Activated B cell treated with CpG ODN at 0.5 μM for 24 hours (primary cell): ENCODE measurements at regions of chr2 and their contacts with region 1.

Region 1: DNA sequence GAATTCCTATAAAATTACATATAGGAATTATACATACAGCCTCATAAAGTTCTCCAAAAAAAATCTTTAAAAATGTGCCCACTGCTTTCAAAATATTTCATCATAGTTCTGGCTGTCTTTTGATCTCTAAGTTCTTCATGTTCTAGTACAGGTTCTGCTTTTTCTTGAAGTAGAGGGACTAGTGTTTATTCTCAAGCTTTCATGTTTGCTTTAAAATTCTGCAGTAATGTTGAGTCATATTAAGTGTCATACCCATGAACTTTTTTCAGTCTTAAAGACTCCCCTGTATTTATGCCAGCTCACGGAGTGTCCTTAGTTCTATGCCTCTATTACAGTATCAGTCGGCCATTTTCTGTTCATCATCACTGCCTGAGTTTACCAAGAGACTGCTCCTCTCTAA is 54.8 kb upstream of the CCDC141 start:
- DNase-seq: no peak
- ATAC-seq: no peak
- H3K4me3 Mint-ChIP-seq: no peak overlapping the region
- H3K27ac Mint-ChIP-seq: peak overlapping the region; percentile 3
- H3K4me1 Mint-ChIP-seq: peaks cover 10% of the 10 kb centered on the region
- H3K27me3 Mint-ChIP-seq: no peaks in the 10 kb centered on the region
- CTCF ChIP-seq: no peak

Region 2: GRCh38 chr2:179068991-179069643 is 35.6 kb before region 1 on chr2:
- CTCF ChIA-PET with region 1: no interaction called
- POLR2A ChIA-PET with region 1: no interaction called
- intact Hi-C with region 1: loop called (anchors 5 kb)
- DNase-seq: no peak
- ATAC-seq: no peak
- H3K4me3 Mint-ChIP-seq: no peak overlapping the region
- H3K27ac Mint-ChIP-seq: no peak overlapping the region
- H3K4me1 Mint-ChIP-seq: peaks cover 2% of the 10 kb centered on the region
- H3K27me3 Mint-ChIP-seq: no peaks in the 10 kb centered on the region
- CTCF ChIP-seq: no peak